Dendritic cell treated with granulocyte-macrophage colony-stimulating factor and Interleukin-4, amounts not matched to agents 40 ng/mL and 50 ng/mL, for 4 days (primary cell): ENCODE measurements at regions of chr16 and their contacts with region 1.

Region 1: GRCh38 chr16:8567750-8568617 is 22.3 kb downstream of the TMEM114 start:
- H3K4me3 Mint-ChIP-seq: no peak overlapping the region
- H3K27ac Mint-ChIP-seq: no peak overlapping the region
- H3K4me1 Mint-ChIP-seq: peaks cover 16% of the 10 kb centered on the region
- H3K27me3 Mint-ChIP-seq: peaks cover 24% of the 10 kb centered on the region

Region 2: GRCh38 chr16:8581831-8582580 is 14.0 kb after region 1 on chr16:
- intact Hi-C with region 1: no loop called
- H3K4me3 Mint-ChIP-seq: no peak overlapping the region
- H3K27ac Mint-ChIP-seq: peak overlapping the region; percentile 78
- H3K4me1 Mint-ChIP-seq: peaks cover 16% of the 10 kb centered on the region
- H3K27me3 Mint-ChIP-seq: peaks cover 44% of the 10 kb centered on the region

Region 3: GRCh38 chr16:8644211-8645140 is 76.5 kb after region 1 on chr16:
- intact Hi-C with region 1: loop called (anchors 1 kb)
- H3K4me3 Mint-ChIP-seq: peak overlapping the region; percentile 70
- H3K27ac Mint-ChIP-seq: peak overlapping the region; percentile 96
- H3K4me1 Mint-ChIP-seq: peaks cover 59% of the 10 kb centered on the region
- H3K27me3 Mint-ChIP-seq: no peaks in the 10 kb centered on the region

Region 4: DNA sequence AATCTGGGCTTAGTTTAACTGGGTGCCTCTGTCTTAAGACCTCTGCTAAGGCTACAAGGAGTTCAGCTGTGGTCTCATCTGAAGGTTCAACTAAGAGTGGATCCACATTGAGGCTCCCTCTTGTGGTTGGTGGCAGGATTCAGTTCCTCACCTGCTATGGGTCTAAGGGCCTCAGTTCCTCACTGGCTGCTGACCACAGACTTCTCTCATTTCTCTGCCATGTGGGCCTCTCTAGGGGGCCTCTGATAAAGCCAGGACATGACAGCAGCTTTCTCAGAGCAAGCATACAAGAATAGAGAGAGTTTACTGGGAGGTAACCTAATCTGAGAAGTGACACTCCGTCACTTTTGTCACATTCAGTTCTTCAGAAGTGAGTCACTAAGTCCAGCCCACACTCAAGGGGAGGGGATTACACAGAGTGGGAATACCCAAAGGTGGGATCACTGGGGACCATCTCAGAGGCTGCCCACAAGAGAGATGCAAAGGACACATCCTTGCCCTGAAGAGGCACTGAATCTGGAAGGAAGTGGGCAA is 87.3 kb after region 1 on chr16:
- intact Hi-C with region 1: loop called (anchors 1 kb)
- H3K4me3 Mint-ChIP-seq: no peak overlapping the region
- H3K27ac Mint-ChIP-seq: peak overlapping the region; percentile 47
- H3K4me1 Mint-ChIP-seq: peaks cover 12% of the 10 kb centered on the region
- H3K27me3 Mint-ChIP-seq: no peaks in the 10 kb centered on the region

Region 5: DNA sequence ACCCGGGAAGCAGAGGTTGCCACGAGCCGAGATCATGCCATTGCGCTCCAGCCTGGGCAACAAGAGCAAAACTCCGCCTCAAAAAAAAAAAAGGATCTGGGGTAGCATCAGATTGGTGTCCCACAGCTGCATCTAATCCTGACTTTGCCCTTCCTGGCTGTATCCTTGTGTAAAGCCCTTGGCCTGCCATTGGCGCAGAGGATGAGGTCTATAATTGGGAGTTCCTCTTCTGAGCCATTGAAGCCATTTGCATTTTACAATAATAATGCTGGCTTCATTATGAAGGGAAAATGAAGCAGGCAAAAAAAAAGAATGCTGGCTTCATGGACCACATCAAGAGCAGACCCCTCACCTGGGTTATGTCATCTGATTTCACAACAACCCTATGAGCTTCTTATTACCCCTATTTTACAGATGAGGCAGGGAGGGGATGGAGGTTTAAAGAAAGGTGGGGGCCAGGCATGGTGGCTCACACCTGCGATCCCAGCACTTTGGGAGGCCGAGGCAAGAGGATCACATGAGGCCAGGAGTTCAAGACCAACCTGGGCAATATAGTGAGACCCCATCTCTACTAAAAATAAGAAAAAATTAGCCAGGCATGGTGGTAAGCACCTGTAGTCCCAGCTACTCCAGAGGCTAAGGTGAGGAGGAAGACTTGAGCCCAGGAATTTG is 313.0 kb after region 1 on chr16:
- intact Hi-C with region 1: loop called (anchors 1 kb)
- H3K4me3 Mint-ChIP-seq: no peak overlapping the region
- H3K27ac Mint-ChIP-seq: no peak overlapping the region
- H3K4me1 Mint-ChIP-seq: no peaks in the 10 kb centered on the region
- H3K27me3 Mint-ChIP-seq: peaks cover 7% of the 10 kb centered on the region